HEK293 (cell line): ENCODE measurements at regions of chr12 and their contacts with region 1.

Region 1: GRCh38 chr12:18139989-18140596 is 50.1 kb upstream of the RERGL start:
- H3K4me3 ChIP-seq: no peak overlapping the region
- H3K27ac ChIP-seq: no peak overlapping the region
- H3K4me1 ChIP-seq: peaks cover 9% of the 10 kb centered on the region; the same call in 1 of the 2 replicates
- CTCF ChIP-seq: no peak

Region 2: GRCh38 chr12:18224745-18225144 is 84.7 kb after region 1 on chr12:
- CTCF ChIA-PET with region 1: interaction called, 28 read pairs
- POLR2A ChIA-PET with region 1: no interaction called
- H3K4me3 ChIP-seq: no peak overlapping the region
- H3K27ac ChIP-seq: no peak overlapping the region
- H3K4me1 ChIP-seq: no peaks in the 10 kb centered on the region
- CTCF ChIP-seq: no peak